Mammary epithelial cell (primary cell): ENCODE measurements at regions of chr15 and their contacts with region 1.

Region 1: GRCh38 chr15:101540480-101541239 is 51.2 kb upstream of the PCSK6 start:
- DNase-seq: no peak
- H3K4me3 ChIP-seq: no peak overlapping the region
- H3K27ac ChIP-seq: no peak overlapping the region
- H3K4me1 ChIP-seq: no peaks in the 10 kb centered on the region
- H3K27me3 ChIP-seq: peaks cover 3% of the 10 kb centered on the region
- CTCF ChIP-seq: no peak

Region 2: GRCh38 chr15:101391981-101392640 is 148.5 kb before region 1 on chr15:
- CTCF ChIA-PET with region 1: no interaction called
- dilution Hi-C with region 1: no loop called
- in situ Hi-C with region 1: no loop called
- intact Hi-C with region 1: no loop called
- DNase-seq: no peak
- H3K4me3 ChIP-seq: no peak overlapping the region
- H3K27ac ChIP-seq: no peak overlapping the region
- H3K4me1 ChIP-seq: no peaks in the 10 kb centered on the region
- H3K27me3 ChIP-seq: no peaks in the 10 kb centered on the region
- CTCF ChIP-seq: no peak

Region 3: GRCh38 chr15:101578437-101578894 is 37.8 kb after region 1 on chr15:
- CTCF ChIA-PET with region 1: no interaction called
- dilution Hi-C with region 1: no loop called
- in situ Hi-C with region 1: no loop called
- intact Hi-C with region 1: loop called (anchors 1 kb)
- DNase-seq: peak; percentile 28
- H3K4me3 ChIP-seq: no peak overlapping the region
- H3K27ac ChIP-seq: no peak overlapping the region
- H3K4me1 ChIP-seq: peaks cover 5% of the 10 kb centered on the region
- H3K27me3 ChIP-seq: no peaks in the 10 kb centered on the region
- CTCF ChIP-seq: peak; percentile 55 to 77

Region 4: DNA sequence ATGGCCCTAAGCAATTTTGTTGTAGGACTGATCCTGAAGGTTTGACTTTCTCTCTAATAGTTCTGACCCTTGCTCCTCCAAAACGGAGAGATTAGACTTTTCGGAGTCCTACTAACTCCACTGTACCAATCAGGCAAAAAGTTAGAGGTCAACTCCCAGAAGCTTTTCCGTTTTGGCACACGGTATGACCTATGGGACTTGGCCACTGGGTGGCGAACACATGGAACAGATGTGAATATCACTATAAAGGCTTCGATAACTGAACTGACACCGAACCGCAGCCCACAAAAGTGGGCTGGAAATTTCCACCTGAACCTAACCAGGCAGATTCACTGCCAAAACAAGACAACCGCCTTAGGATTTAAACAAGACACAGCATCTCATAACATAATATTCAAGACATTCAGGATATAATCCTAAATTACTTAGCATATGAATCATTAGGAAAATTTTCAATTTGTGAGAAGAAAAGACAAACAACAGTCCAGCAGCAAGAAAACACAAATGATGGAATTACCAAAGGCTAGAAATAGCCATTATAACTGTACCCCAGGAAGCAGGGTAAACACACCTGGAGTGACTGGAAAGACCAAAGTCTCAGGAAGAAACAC is 123.7 kb after region 1 on chr15:
- CTCF ChIA-PET with region 1: no interaction called
- dilution Hi-C with region 1: loop called (anchors 10 kb)
- in situ Hi-C with region 1: no loop called
- intact Hi-C with region 1: no loop called
- DNase-seq: no peak
- H3K4me3 ChIP-seq: no peak overlapping the region
- H3K27ac ChIP-seq: no peak overlapping the region
- H3K4me1 ChIP-seq: no peaks in the 10 kb centered on the region
- H3K27me3 ChIP-seq: no peaks in the 10 kb centered on the region
- CTCF ChIP-seq: peak; percentile 31 to 32